Adrenal gland (tissue), 19 donors: ENCODE measurements at regions of chr3 and their contacts with region 1.

Region 1: GRCh38 chr3:62188681-62189383 is 184.5 kb downstream of the FEZF2 start:
- DNase-seq: peak; percentile 49 to 92 (median 80)
- H3K4me3 ChIP-seq: peak overlapping the region in 1 of 4 donors; percentile 28
- H3K27ac ChIP-seq: no peak overlapping the region
- H3K4me1 ChIP-seq: peaks cover 6 to 7% of the 10 kb centered on the region in 2 donors
- H3K27me3 ChIP-seq: no peaks in the 10 kb centered on the region
- CTCF ChIP-seq: peak; percentile 73 to 85 (median 81)
- POLR2A ChIP-seq: no peak

Region 2: GRCh38 chr3:61858056-61858455 is 330.8 kb before region 1 on chr3:
- intact Hi-C with region 1: loop called (anchors 5 to 10 kb)
- DNase-seq: no peak
- H3K4me3 ChIP-seq: no peak overlapping the region
- H3K27ac ChIP-seq: no peak overlapping the region
- H3K4me1 ChIP-seq: peaks cover 4 to 8% of the 10 kb centered on the region in 2 donors
- H3K27me3 ChIP-seq: no peaks in the 10 kb centered on the region
- CTCF ChIP-seq: peak; percentile 25 to 65 (median 52)
- POLR2A ChIP-seq: no peak

Region 3: DNA sequence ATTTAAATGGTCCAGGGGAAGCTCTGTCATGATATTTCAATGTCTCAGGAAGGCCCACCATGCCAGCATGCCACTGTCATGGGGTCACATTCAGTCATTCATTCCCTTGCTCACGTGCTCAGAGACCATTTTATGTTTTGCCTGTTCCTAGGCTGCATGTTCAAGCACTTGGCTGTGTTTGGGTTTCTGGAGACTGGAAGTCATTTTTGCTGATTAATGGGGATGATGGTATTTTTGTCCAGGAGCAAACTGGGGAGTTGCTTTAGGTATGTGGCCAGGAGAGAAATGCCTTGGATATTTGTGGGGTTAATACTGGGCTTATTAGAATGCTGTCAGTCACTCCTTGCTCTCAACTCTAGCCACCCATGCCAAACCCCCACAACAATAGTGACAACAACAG is 323.9 kb before region 1 on chr3:
- intact Hi-C with region 1: loop called in 1 of 2 experiments (anchors 10 kb)
- DNase-seq: no peak
- H3K4me3 ChIP-seq: no peak overlapping the region
- H3K27ac ChIP-seq: no peak overlapping the region
- H3K4me1 ChIP-seq: peaks cover 0 to 6% of the 10 kb centered on the region in 2 donors
- H3K27me3 ChIP-seq: no peaks in the 10 kb centered on the region
- CTCF ChIP-seq: no peak
- POLR2A ChIP-seq: no peak

Region 4: GRCh38 chr3:62318750-62319569 is 130.1 kb after region 1 on chr3:
- intact Hi-C with region 1: no loop called
- DNase-seq: peak; percentile 82 to 96 (median 87)
- H3K4me3 ChIP-seq: peak overlapping the region; percentile 31 to 64 (median 49)
- H3K27ac ChIP-seq: peak overlapping the region; percentile 47 to 92 (median 54)
- H3K4me1 ChIP-seq: peaks cover 0 to 3% of the 10 kb centered on the region in 2 donors
- H3K27me3 ChIP-seq: no peaks in the 10 kb centered on the region
- CTCF ChIP-seq: no peak
- POLR2A ChIP-seq: peak; percentile 68 to 76